CD4-positive, alpha-beta memory T cell (primary cell): ENCODE measurements at regions of chr10 and their contacts with region 1.

Region 1: GRCh38 chr10:56349611-56350010 is 11.4 kb downstream of the ZWINT start:
- DNase-seq: no peak
- H3K4me3 ChIP-seq: no peak overlapping the region
- H3K4me3 Mint-ChIP-seq: no peak overlapping the region
- H3K27ac ChIP-seq: no peak overlapping the region
- H3K27ac Mint-ChIP-seq: no peak overlapping the region
- H3K4me1 ChIP-seq: no peaks in the 10 kb centered on the region
- H3K4me1 Mint-ChIP-seq: peaks cover 0 to 1% (median 0%) of the 10 kb centered on the region in 4 donors
- H3K27me3 ChIP-seq: no peaks in the 10 kb centered on the region
- H3K27me3 Mint-ChIP-seq: no peaks in the 10 kb centered on the region

Region 2: DNA sequence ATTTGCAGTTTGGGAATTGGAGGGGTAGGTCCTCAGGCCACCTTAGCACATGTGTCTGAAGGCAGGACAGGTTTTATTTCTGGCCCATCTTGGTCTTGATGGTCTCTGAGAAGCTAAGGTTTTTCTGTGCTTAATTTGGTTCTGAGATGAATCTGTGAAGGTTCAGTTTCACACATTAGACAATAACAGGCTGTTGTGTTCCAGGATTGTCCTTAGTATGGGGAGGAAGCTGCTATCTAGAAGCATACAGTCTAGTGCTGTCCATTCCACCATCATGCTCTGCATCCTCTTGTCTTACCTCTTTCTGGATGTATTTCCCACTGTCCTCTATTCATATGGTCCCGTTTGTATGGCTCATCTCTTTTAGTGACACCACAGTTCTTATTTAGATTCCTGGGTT is 1992.3 kb after region 1 on chr10:
- CTCF ChIA-PET with region 1: no interaction called
- POLR2A ChIA-PET with region 1: no interaction called
- intact Hi-C with region 1: loop called (anchors 10 kb)
- DNase-seq: no peak
- H3K4me3 ChIP-seq: no peak overlapping the region
- H3K4me3 Mint-ChIP-seq: no peak overlapping the region
- H3K27ac ChIP-seq: no peak overlapping the region
- H3K27ac Mint-ChIP-seq: no peak overlapping the region
- H3K4me1 ChIP-seq: peaks cover 11% of the 10 kb centered on the region
- H3K4me1 Mint-ChIP-seq: peaks cover 26 to 58% (median 36%) of the 10 kb centered on the region in 4 donors
- H3K27me3 ChIP-seq: no peaks in the 10 kb centered on the region
- H3K27me3 Mint-ChIP-seq: no peaks in the 10 kb centered on the region